Mammary epithelial cell (primary cell): ENCODE measurements at regions of chr10 and their contacts with region 1.

Region 1: GRCh38 chr10:22597138-22597537 is 117.2 kb downstream of the PIP4K2A start:
- DNase-seq: no peak
- H3K4me3 ChIP-seq: no peak overlapping the region
- H3K27ac ChIP-seq: no peak overlapping the region
- H3K4me1 ChIP-seq: peaks cover 5% of the 10 kb centered on the region
- H3K27me3 ChIP-seq: no peaks in the 10 kb centered on the region
- CTCF ChIP-seq: no peak

Region 2: GRCh38 chr10:21989453-21990154 is 607.5 kb before region 1 on chr10:
- CTCF ChIA-PET with region 1: no interaction called
- dilution Hi-C with region 1: no loop called
- in situ Hi-C with region 1: loop called in 1 of 2 experiments (anchors 25 kb)
- intact Hi-C with region 1: no loop called
- DNase-seq: peak; percentile 56
- H3K4me3 ChIP-seq: no peak overlapping the region
- H3K27ac ChIP-seq: no peak overlapping the region
- H3K4me1 ChIP-seq: no peaks in the 10 kb centered on the region
- H3K27me3 ChIP-seq: no peaks in the 10 kb centered on the region
- CTCF ChIP-seq: peak; percentile 52 to 73

Region 3: DNA sequence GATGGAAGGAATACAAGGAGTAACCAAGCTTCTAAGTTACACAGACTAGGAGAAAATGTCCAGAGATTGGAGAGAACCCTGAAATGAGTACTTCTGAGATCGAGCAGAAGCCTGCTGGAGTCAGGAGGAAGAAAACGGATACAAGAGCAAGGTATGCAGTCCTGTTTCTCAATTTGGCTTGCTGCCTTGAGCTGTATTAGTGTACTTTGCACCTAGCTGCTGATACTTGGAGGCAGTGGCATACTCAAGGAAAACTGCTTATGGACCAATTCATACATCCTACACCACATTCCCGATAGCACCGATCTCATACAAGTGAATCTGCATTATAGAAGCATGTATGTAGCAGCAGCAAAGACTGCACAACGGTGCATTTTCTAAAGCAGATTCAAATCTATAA is 102.8 kb after region 1 on chr10:
- CTCF ChIA-PET with region 1: no interaction called
- dilution Hi-C with region 1: loop called (anchors 5 kb)
- in situ Hi-C with region 1: no loop called
- intact Hi-C with region 1: no loop called
- DNase-seq: no peak
- H3K4me3 ChIP-seq: no peak overlapping the region
- H3K27ac ChIP-seq: no peak overlapping the region
- H3K4me1 ChIP-seq: no peaks in the 10 kb centered on the region
- H3K27me3 ChIP-seq: no peaks in the 10 kb centered on the region
- CTCF ChIP-seq: no peak